Natural killer cell (primary cell): ENCODE measurements at regions of chr2 and their contacts with region 1.

Region 1: DNA sequence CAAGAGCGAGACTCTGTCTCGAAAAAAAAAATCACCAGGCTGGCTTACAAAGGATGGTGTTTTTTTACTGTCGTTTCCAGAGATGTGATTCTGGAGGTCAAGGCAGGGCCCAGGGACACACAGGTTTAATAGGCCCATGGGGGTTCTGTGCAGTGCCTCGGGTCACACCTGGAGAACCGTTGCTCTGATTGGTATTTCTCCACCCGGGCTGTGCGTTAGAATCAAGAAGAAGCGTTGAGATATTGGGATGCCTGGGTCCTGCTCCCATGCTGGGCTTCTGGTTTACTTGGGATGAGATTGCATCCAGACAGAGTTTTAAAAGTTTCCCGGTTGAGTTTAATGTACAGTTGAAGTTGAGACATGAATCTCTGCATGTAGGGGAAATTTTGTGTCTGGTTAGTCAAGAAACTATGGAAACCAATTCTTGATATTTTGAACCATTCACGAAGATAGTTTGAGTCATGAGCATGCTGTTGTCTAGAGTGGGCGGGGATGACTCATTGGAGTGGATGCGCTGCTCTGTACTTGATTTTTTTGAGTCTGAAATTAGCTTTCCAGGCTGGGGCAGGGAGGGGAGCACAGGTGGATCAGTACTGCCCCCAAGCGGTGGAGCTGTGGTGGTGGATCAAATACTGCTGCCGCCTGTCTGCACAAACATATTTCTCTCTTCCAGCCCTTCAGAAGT is 50.1 kb downstream of the GREB1 start:
- DNase-seq: peak; percentile 27 to 68
- ATAC-seq: peak; percentile 65 to 76 (median 74)
- H3K4me3 ChIP-seq: no peak overlapping the region
- H3K4me3 Mint-ChIP-seq: no peak overlapping the region
- H3K27ac ChIP-seq: no peak overlapping the region
- H3K27ac Mint-ChIP-seq: no peak overlapping the region
- H3K4me1 ChIP-seq: no peaks in the 10 kb centered on the region
- H3K4me1 Mint-ChIP-seq: peaks cover 0 to 6% of the 10 kb centered on the region in 2 donors
- H3K27me3 ChIP-seq: no peaks in the 10 kb centered on the region
- H3K27me3 Mint-ChIP-seq: peaks cover 0 to 5% of the 10 kb centered on the region in 2 donors
- CTCF ChIP-seq: peak; percentile 56

Region 2: GRCh38 chr2:11234309-11234708 is 349.7 kb before region 1 on chr2:
- intact Hi-C with region 1: loop called (anchors 10 kb)
- DNase-seq: peak in 1 of 2 donors; percentile 9
- ATAC-seq: no peak
- H3K4me3 ChIP-seq: no peak overlapping the region
- H3K4me3 Mint-ChIP-seq: no peak overlapping the region
- H3K27ac ChIP-seq: no peak overlapping the region
- H3K27ac Mint-ChIP-seq: no peak overlapping the region
- H3K4me1 ChIP-seq: no peaks in the 10 kb centered on the region
- H3K4me1 Mint-ChIP-seq: peaks cover 11 to 22% of the 10 kb centered on the region in 2 donors
- H3K27me3 ChIP-seq: no peaks in the 10 kb centered on the region
- H3K27me3 Mint-ChIP-seq: no peaks in the 10 kb centered on the region
- CTCF ChIP-seq: no peak

Region 3: DNA sequence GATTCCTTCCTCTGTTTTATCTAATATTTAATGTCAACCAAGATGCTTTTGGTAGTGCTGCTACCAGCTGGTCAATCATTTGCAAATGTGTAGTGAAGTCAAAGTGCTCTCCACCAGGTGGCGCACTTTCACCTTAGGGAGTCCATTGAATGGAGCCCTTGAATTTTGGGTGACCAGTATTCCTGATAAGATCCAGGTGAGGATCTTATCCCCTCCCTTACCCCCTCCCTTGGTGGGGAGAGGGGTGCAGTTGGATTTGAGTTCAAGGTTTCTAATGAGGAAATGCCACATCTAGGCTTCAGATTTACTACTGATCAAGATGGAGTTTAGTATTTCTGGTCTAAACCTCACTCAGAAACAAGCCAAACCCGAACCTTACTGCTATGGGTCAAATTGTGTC is 106.0 kb before region 1 on chr2:
- intact Hi-C with region 1: loop called (anchors 2 kb)
- DNase-seq: peak; percentile 68 to 89
- ATAC-seq: peak; percentile 72 to 81 (median 81)
- H3K4me3 ChIP-seq: no peak overlapping the region
- H3K4me3 Mint-ChIP-seq: no peak overlapping the region
- H3K27ac ChIP-seq: no peak overlapping the region
- H3K27ac Mint-ChIP-seq: no peak overlapping the region
- H3K4me1 ChIP-seq: peaks cover 1% of the 10 kb centered on the region
- H3K4me1 Mint-ChIP-seq: peaks cover 0 to 2% of the 10 kb centered on the region in 2 donors
- H3K27me3 ChIP-seq: peaks cover 17% of the 10 kb centered on the region
- H3K27me3 Mint-ChIP-seq: peaks cover 22 to 34% of the 10 kb centered on the region in 2 donors
- CTCF ChIP-seq: peak; percentile 93